Psoas muscle (tissue), 8 donors: ENCODE measurements at regions of chr3 and their contacts with region 1.

Region 1: DNA sequence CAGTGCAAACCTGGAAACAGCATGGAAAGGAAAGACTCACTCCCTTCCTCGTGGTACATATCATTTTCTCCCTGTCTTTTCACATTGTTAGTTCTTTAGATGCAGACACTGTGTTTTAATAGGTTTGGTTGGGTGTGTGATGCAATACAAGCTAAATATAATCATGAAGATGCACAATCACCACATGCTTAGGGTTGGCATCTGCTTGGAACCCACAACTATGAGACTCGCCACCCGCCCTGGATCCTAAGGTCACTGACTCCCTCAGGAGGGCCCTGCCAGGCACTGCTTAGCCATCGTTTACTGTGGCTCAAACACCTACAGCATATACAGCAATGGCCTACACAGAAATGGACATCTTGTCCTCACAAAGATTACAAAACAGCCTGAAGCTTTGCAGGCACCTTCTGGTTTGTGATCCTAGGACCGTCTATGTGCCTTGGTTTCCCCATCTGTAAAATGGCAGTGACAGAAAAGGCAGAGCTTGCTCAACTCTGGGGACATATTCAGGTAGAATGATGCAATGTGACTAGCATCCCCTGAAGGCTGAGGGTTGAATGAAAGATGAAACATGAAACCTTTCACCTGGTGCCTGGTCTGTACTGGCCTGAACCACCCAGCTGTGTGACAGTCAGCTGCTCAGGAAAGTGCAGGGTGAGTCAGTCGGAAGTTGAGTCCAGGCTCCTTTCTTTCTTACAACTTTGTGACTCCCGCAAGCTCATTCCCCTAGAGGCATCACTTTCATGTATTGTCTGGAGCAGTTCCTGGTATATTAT is 123.6 kb upstream of the PFN2 start:
- DNase-seq: peak; percentile 67 to 91
- ATAC-seq: peak; percentile 93 to 95 (median 94)
- H3K4me3 ChIP-seq: no peak overlapping the region
- H3K27ac ChIP-seq: peak overlapping the region; percentile 90
- H3K4me1 ChIP-seq: peaks cover 55% of the 10 kb centered on the region
- H3K27me3 ChIP-seq: no peaks in the 10 kb centered on the region
- CTCF ChIP-seq: no peak

Region 2: GRCh38 chr3:150069154-150069527 is 25.2 kb before region 1 on chr3:
- intact Hi-C with region 1: loop called in 1 of 2 experiments (anchors 2 kb)
- DNase-seq: no peak
- ATAC-seq: peak; percentile 89 to 93 (median 92)
- H3K4me3 ChIP-seq: no peak overlapping the region
- H3K27ac ChIP-seq: peak overlapping the region; percentile 90
- H3K4me1 ChIP-seq: peaks cover 43% of the 10 kb centered on the region
- H3K27me3 ChIP-seq: no peaks in the 10 kb centered on the region
- CTCF ChIP-seq: no peak

Region 3: GRCh38 chr3:150129166-150129565 is 34.8 kb after region 1 on chr3:
- intact Hi-C with region 1: no loop called
- DNase-seq: no peak
- ATAC-seq: no peak
- H3K4me3 ChIP-seq: no peak overlapping the region
- H3K27ac ChIP-seq: no peak overlapping the region
- H3K4me1 ChIP-seq: no peaks in the 10 kb centered on the region
- H3K27me3 ChIP-seq: no peaks in the 10 kb centered on the region
- CTCF ChIP-seq: no peak

Region 4: GRCh38 chr3:150140614-150141321 is 46.4 kb after region 1 on chr3:
- intact Hi-C with region 1: loop called in 1 of 2 experiments (anchors 5 kb)
- DNase-seq: no peak
- ATAC-seq: no peak
- H3K4me3 ChIP-seq: no peak overlapping the region
- H3K27ac ChIP-seq: no peak overlapping the region
- H3K4me1 ChIP-seq: peaks cover 5% of the 10 kb centered on the region
- H3K27me3 ChIP-seq: no peaks in the 10 kb centered on the region
- CTCF ChIP-seq: no peak

Region 5: DNA sequence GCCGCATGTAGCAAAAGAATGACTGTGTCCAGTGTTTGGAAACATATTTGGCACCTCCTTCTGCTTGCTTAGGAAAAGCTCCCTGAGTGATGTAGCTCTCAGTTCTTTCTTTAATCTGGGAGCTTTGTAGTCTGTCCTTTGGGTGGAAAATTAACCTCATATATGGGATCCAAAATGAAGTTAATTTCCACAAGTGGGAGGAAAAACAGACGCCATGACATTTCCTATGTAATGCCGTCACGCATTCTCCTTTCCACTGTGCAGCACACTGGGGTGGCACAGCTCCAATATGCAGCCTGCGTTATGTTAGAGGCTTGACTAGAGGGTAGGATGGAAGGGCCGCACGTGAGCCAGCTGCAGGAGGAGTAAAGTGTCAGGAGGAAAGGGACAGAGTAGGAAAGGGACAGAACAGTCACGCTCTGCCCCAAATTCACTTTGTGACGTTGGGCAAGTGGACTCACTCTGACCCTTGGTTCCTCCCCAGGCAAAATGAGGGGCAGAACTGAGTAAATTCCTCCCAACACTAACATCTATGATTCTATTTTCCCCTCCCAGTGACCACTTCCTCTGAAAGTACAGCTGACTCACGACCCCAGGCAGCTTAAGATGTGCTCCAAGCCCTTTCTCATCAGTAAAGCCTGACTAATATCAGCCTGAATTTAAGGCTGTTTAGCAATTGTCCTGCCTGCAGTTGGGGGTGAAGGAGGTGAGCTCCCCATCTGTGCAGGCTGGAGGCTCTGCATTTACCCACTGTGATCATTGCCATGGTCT is 52.8 kb after region 1 on chr3:
- intact Hi-C with region 1: loop called (anchors 2 to 5 kb)
- DNase-seq: peak; percentile 67 to 81
- ATAC-seq: peak; percentile 55 to 72 (median 69)
- H3K4me3 ChIP-seq: peak overlapping the region; percentile 17
- H3K27ac ChIP-seq: peak overlapping the region; percentile 96
- H3K4me1 ChIP-seq: peaks cover 57% of the 10 kb centered on the region
- H3K27me3 ChIP-seq: no peaks in the 10 kb centered on the region
- CTCF ChIP-seq: no peak

Region 6: DNA sequence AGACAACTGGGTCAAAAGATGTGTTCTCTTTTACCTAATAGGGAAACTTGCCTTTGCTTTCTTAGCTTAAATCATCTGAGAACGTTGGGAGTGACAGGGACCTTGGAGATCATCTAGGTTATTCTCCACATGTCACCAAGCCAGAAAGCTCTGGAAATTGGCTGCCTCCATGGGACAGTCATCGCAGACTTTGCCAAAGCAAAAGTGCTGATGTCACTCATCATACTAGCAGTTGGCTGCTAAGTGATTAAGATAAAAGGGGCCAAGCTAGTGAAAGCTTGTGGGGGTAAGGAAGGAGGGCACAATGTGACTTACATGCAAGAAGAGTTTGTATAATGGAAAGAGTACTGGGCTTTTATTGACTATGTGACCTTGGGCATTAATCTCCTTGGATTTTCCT is 74.4 kb after region 1 on chr3:
- intact Hi-C with region 1: loop called in 1 of 2 experiments (anchors 5 kb)
- DNase-seq: peak; percentile 56 to 67
- ATAC-seq: peak; percentile 94 to 97 (median 96)
- H3K4me3 ChIP-seq: no peak overlapping the region
- H3K27ac ChIP-seq: peak overlapping the region; percentile 76
- H3K4me1 ChIP-seq: peaks cover 27% of the 10 kb centered on the region
- H3K27me3 ChIP-seq: no peaks in the 10 kb centered on the region
- CTCF ChIP-seq: no peak